Activated CD8-positive, alpha-beta T cell treated with anti-CD3 and anti-CD28 coated beads, Interleukin-2, amount 10 ng/mL, durations not matched to agents 7 days and 5 days (primary cell): ENCODE measurements at regions of chr14 and their contacts with region 1.

Region 1: DNA sequence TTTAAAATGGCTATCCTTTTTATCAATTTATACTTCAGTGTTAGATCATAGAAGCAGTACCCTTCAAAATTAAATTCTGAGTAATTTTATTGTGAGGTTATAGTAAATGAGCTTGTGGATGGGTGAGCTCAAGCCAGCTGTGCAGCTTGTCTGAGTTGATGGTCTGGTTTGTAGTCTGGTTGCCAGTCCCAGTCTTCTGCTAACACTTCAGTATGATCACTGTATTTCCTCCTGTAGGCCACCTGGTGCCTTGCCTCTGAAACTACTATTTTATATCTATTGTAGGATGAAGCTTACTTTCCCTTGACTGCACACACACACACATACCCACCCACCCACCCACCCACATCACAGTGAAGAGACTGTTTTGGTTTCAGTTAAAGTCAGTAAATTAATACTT is 496.4 kb downstream of the PCNX1 start:
- DNase-seq: peak; percentile 59
- ATAC-seq: peak; percentile 74
- H3K4me3 Mint-ChIP-seq: no peak overlapping the region
- H3K27ac Mint-ChIP-seq: peak overlapping the region; percentile 36
- H3K4me1 Mint-ChIP-seq: peaks cover 31% of the 10 kb centered on the region
- H3K27me3 Mint-ChIP-seq: no peaks in the 10 kb centered on the region

Region 2: GRCh38 chr14:71138448-71139293 is 265.0 kb before region 1 on chr14:
- CTCF ChIA-PET with region 1: interaction called, 37 read pairs
- POLR2A ChIA-PET with region 1: interaction called, 5 read pairs
- DNase-seq: peak; percentile 67
- ATAC-seq: peak; percentile 20
- H3K4me3 Mint-ChIP-seq: no peak overlapping the region
- H3K27ac Mint-ChIP-seq: peak overlapping the region; percentile 5
- H3K4me1 Mint-ChIP-seq: peaks cover 52% of the 10 kb centered on the region
- H3K27me3 Mint-ChIP-seq: no peaks in the 10 kb centered on the region

Region 3: DNA sequence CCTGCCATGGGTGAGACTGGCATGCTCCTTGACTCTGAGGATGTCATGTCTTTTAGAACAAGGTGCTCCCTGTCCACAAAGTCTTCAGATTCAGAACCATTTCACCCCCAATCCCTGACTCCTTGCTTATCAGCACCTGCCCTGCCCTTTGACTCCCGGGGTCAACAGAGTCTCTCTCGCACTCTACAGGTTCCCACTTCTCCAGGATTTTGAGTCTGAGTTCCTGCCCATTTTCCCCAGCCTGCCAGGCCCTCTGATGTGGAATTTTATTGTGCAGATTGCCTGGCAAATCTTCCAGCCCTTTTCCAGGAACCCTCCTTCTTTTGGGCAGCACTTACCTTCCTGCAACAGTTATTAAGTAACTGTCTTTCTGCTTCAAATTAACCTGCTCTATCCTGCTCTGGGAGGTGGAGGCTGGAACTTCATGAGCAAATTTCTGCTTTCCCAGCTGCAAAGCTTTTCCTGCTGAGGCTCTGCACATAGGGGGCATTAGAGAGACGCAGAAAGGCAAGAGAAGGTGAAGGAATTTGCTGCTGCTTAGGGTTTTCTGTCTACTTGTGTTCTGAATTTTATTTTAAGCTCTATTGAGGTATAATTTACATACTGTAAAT is 237.4 kb before region 1 on chr14:
- CTCF ChIA-PET with region 1: interaction called, 15 read pairs
- POLR2A ChIA-PET with region 1: no interaction called
- DNase-seq: no peak
- ATAC-seq: no peak
- H3K4me3 Mint-ChIP-seq: no peak overlapping the region
- H3K27ac Mint-ChIP-seq: no peak overlapping the region
- H3K4me1 Mint-ChIP-seq: peaks cover 24% of the 10 kb centered on the region
- H3K27me3 Mint-ChIP-seq: peaks cover 24% of the 10 kb centered on the region

Region 4: DNA sequence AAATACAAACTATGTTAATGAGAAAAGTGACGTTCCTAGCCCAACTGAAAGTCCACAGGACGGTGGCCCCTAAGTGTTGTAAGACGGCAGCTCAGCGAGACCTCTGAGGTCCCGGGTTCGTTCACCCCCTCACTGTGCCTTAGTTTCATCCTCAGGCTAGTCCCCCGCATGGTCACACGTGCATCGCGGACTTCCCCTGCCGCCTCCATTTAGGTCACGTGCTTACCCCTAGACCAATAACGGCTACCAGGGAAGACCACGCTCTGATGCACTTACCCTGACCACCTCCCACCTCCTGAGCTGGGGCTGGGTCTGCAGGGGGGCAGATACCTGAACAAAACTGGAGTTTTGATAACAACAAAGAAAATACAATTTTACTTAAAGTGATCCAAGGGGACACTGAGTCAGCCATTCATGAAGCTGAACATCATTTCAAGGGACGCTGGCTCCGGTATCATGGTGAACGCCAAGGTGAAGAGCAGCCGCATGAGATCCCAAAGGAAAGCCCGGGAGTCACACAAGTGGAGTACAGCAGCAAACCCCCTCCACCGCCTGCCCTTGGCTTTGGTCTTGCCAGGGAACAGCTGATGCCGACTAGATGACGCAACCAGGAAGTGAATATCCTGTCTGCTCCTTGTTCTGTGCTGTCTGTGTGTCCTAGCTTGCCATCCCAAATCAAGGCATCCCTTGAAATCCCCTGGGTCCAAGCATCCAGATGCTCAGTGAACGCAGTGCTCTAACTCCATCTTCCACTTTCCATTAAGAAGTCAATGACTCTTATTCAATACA is 222.2 kb before region 1 on chr14:
- CTCF ChIA-PET with region 1: no interaction called
- POLR2A ChIA-PET with region 1: no interaction called
- DNase-seq: no peak
- ATAC-seq: no peak
- H3K4me3 Mint-ChIP-seq: no peak overlapping the region
- H3K27ac Mint-ChIP-seq: no peak overlapping the region
- H3K4me1 Mint-ChIP-seq: no peaks in the 10 kb centered on the region
- H3K27me3 Mint-ChIP-seq: peaks cover 7% of the 10 kb centered on the region

Region 5: GRCh38 chr14:71488703-71489191 is 85.1 kb after region 1 on chr14:
- CTCF ChIA-PET with region 1: no interaction called
- POLR2A ChIA-PET with region 1: no interaction called
- DNase-seq: no peak
- ATAC-seq: no peak
- H3K4me3 Mint-ChIP-seq: no peak overlapping the region
- H3K27ac Mint-ChIP-seq: no peak overlapping the region
- H3K4me1 Mint-ChIP-seq: peaks cover 5% of the 10 kb centered on the region
- H3K27me3 Mint-ChIP-seq: no peaks in the 10 kb centered on the region

Region 6: GRCh38 chr14:71529848-71530247 is 126.2 kb after region 1 on chr14:
- CTCF ChIA-PET with region 1: no interaction called
- POLR2A ChIA-PET with region 1: no interaction called
- DNase-seq: no peak
- ATAC-seq: no peak
- H3K4me3 Mint-ChIP-seq: no peak overlapping the region
- H3K27ac Mint-ChIP-seq: peak overlapping the region; percentile 50
- H3K4me1 Mint-ChIP-seq: no peaks in the 10 kb centered on the region
- H3K27me3 Mint-ChIP-seq: no peaks in the 10 kb centered on the region

Region 7: GRCh38 chr14:71620401-71620800 is 216.7 kb after region 1 on chr14:
- CTCF ChIA-PET with region 1: no interaction called
- POLR2A ChIA-PET with region 1: no interaction called
- DNase-seq: no peak
- ATAC-seq: no peak
- H3K4me3 Mint-ChIP-seq: no peak overlapping the region
- H3K27ac Mint-ChIP-seq: no peak overlapping the region
- H3K4me1 Mint-ChIP-seq: no peaks in the 10 kb centered on the region
- H3K27me3 Mint-ChIP-seq: no peaks in the 10 kb centered on the region